ENCODE measurements at regions of chr10 and their contacts with region 1.

Region 1: GRCh38 chr10:29443745-29444523 is 155.1 kb downstream of the LYZL1 start:
- DNase-seq: no peak
- H3K4me3 Mint-ChIP-seq: no peak overlapping the region
- H3K27ac Mint-ChIP-seq: no peak overlapping the region
- H3K4me1 Mint-ChIP-seq: peaks cover 13% of the 10 kb centered on the region
- H3K27me3 Mint-ChIP-seq: no peaks in the 10 kb centered on the region

Region 2: DNA sequence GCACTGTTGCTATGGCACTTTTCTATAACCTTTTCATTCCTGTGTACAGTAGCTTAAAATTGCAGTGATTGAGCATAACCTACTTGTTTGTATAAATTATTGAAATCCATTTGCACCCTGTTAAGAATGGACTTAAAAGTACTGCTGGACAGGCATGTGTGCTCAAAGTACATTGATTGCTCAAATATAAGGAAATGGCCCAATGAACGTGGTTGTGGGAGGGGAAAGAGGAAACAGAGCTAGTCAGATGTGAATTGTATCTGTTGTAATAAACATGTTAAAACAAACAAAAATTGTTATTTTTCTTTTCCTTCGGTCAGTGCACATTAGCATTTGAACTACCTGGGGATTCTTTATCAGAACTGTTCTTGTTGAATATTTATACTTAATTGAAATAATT is 823.7 kb before region 1 on chr10:
- CTCF ChIA-PET with region 1: no interaction called
- POLR2A ChIA-PET with region 1: no interaction called
- intact Hi-C with region 1: no loop called
- DNase-seq: no peak
- H3K4me3 Mint-ChIP-seq: no peak overlapping the region
- H3K27ac Mint-ChIP-seq: no peak overlapping the region
- H3K4me1 Mint-ChIP-seq: no peaks in the 10 kb centered on the region
- H3K27me3 Mint-ChIP-seq: no peaks in the 10 kb centered on the region

Region 3: GRCh38 chr10:29377333-29377961 is 66.5 kb before region 1 on chr10:
- CTCF ChIA-PET with region 1: interaction called, 6 read pairs
- POLR2A ChIA-PET with region 1: no interaction called
- intact Hi-C with region 1: loop called (anchors 1 kb)
- DNase-seq: peak; percentile 12
- H3K4me3 Mint-ChIP-seq: no peak overlapping the region
- H3K27ac Mint-ChIP-seq: no peak overlapping the region
- H3K4me1 Mint-ChIP-seq: peaks cover 3% of the 10 kb centered on the region
- H3K27me3 Mint-ChIP-seq: peaks cover 4% of the 10 kb centered on the region

Region 4: DNA sequence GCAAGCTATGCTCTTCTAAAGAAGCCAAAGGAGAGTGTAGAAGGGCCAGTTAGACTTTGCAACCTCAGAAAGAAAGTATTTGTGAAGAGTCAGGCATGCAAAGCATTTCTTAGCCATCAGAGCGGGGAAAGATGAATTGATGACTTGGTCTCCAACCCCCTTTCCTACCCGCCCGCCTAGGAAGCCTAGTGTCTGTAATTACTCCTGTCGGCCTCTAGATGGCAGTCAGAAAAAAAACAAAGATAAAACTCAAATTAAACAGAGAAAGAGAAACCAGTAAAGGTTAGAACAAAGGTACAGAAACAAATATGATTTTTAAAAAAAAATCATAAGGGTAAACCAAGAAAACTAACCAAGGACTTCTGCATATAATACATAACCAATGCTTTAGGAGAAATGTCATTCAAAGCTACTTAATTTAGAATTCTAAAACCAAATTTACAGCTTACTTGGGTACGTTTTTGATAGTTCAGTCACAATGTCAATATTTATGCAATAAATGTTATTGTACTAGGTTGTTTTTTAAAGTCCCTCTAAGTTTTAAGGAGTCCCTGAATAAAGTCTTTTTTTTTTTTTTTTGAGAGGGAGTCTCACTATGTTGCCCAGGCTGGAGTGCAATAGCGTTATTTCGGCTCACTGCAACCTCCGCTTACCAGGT is 57.5 kb before region 1 on chr10:
- CTCF ChIA-PET with region 1: interaction called, 17 read pairs
- POLR2A ChIA-PET with region 1: no interaction called
- intact Hi-C with region 1: loop called (anchors 2 kb)
- DNase-seq: peak; percentile 27
- H3K4me3 Mint-ChIP-seq: no peak overlapping the region
- H3K27ac Mint-ChIP-seq: no peak overlapping the region
- H3K4me1 Mint-ChIP-seq: no peaks in the 10 kb centered on the region
- H3K27me3 Mint-ChIP-seq: peaks cover 3% of the 10 kb centered on the region

Region 5: GRCh38 chr10:29409241-29410057 is 34.5 kb before region 1 on chr10:
- CTCF ChIA-PET with region 1: interaction called, 18 read pairs
- POLR2A ChIA-PET with region 1: no interaction called
- intact Hi-C with region 1: no loop called
- DNase-seq: peak; percentile 58
- H3K4me3 Mint-ChIP-seq: peak overlapping the region; percentile 87
- H3K27ac Mint-ChIP-seq: peak overlapping the region; percentile 78
- H3K4me1 Mint-ChIP-seq: peaks cover 32% of the 10 kb centered on the region
- H3K27me3 Mint-ChIP-seq: no peaks in the 10 kb centered on the region

Region 6: DNA sequence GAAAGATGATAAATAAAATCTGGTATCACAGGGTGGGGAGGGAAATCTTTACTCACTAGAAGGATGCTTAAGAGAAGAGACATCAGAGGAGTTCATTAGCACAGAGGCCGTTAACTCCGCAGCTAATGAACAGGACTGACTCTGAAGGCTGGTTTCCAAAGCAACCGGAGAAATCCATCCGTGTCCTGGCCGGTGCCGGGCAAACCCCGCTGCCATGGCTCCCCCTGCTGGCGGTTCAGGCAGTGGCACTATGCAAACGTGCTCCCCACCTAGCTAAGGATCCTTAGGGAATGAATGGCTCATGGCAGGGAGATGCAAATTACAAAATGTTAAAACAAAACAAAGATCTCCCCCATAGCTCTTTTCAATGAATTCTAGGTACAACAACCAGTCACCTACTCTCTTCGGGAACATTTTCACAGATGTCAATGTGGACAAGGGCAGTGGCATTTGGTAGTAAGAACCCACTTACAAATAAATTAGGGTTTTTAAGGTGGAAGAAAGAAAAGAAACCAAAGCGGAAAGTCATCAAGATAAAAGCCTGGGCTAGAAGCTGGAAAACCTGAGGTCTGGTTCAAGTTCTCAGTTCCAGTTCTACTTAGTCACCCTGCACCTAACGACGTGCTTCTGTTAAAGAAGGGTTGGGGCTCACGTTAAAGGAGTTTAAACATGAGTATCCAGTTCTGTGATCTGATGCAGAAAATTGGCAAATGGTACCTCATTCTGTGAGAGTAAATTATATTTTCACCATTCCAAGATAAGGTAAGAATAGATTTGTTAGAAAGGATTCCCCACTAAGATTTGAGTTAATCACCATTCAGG is 52.6 kb after region 1 on chr10:
- CTCF ChIA-PET with region 1: interaction called, 13 read pairs
- POLR2A ChIA-PET with region 1: no interaction called
- intact Hi-C with region 1: loop called (anchors 1 kb)
- DNase-seq: peak; percentile 74
- H3K4me3 Mint-ChIP-seq: no peak overlapping the region
- H3K27ac Mint-ChIP-seq: no peak overlapping the region
- H3K4me1 Mint-ChIP-seq: peaks cover 5% of the 10 kb centered on the region
- H3K27me3 Mint-ChIP-seq: no peaks in the 10 kb centered on the region

Region 7: DNA sequence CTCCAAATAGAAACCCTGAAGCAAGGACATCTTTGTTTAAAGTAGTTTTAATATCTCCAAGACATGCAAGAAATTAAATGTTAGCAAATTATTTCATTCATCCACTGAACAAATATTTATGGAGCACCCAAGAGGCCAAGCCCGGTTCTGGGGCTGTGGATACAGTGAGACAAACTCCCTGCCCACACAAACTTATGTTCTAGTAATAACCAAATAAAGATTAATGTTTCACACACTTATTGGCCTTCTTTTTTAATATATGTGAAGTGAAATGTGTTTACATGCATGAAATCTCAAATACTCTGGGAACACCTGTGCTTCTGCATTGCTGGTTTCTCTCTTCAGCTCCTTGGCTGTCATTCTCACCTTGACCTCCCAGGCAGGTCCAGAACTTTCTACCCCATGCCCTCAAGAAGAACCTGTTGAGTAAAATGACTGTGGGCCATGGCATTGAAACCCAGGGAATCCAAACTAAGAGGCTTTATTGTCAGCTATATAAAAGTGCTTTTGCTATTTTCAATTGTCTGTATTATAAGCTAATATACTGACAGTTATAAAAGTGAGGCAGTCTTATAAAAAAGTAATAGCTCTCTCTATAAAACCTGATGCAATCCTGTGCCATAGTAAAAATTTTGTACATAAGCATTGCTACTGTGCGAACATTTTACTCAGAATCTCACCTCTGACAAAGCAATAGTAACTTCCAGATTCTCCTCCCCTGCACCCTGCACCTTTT is 147.1 kb after region 1 on chr10:
- CTCF ChIA-PET with region 1: no interaction called
- POLR2A ChIA-PET with region 1: no interaction called
- intact Hi-C with region 1: loop called (anchors 1 kb)
- DNase-seq: no peak
- H3K4me3 Mint-ChIP-seq: no peak overlapping the region
- H3K27ac Mint-ChIP-seq: peak overlapping the region; percentile 66
- H3K4me1 Mint-ChIP-seq: peaks cover 9% of the 10 kb centered on the region
- H3K27me3 Mint-ChIP-seq: no peaks in the 10 kb centered on the region

Measured in activated CD4-positive, alpha-beta memory T cell treated with anti-CD3 and anti-CD28 coated beads for 36 hours (primary cell).